ENCODE measurements at regions of chr2 and their contacts with region 1.

Region 1: GRCh38 chr2:43226558-43226954 is at the start of gene ZFP36L2:
- DNase-seq: peak; percentile 96
- CTCF ChIP-seq: no peak

Region 2: DNA sequence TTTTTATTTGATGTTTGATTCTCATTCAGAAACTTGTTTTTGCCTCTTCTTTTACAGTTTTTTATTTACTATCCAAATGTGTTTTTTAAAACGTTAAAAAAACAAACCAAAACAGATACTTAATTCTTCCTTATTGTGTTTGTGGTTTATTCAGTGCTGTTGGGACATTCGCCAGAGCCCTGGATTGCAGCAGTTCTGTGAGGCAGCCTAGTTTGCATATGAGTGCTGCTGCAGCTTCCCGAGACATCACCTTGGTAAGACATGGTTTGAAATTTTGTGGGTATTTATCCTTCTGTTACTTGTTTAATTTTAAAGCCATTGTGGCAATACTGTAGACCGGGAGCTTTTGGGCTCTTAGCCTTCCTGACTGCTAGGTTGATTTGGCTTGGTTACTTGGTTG is 566.9 kb before region 1 on chr2:
- CTCF ChIA-PET with region 1: no interaction called
- POLR2A ChIA-PET with region 1: no interaction called
- DNase-seq: no peak
- CTCF ChIP-seq: no peak

Region 3: DNA sequence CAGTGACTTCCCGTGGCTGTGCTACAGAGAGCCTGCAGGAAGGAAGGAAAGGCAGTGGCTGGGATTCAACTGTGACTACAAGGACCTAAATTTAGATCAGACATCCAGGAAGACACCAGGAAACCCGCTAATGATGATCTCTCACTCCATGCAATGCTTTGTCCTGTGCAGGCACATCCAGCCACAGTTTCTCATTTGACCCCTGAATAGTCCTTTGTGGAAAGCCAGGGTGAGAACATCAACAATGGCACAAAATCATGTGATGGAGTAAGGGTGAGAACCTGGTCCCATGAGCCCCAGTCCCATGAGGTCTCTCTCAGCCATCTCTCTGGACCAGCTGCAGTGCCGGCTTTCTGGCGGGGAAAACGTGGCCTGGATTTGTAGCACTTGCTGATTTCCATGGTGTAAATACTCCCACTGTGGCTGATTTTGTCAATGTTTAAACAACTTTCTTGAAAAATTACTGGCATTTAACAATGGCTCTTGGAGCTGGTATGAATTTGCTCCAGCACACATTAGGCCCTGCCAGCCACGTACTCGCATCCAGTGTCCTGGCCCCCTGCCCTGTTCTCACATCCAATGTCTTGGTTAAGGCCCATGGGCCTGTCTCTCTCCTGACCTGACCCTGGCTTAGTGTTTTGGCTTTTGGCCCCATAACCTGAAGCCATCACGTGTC is 275.2 kb before region 1 on chr2:
- CTCF ChIA-PET with region 1: interaction called, 39 read pairs
- POLR2A ChIA-PET with region 1: no interaction called
- DNase-seq: no peak
- CTCF ChIP-seq: no peak

Region 4: GRCh38 chr2:43169987-43170386 is 56.6 kb before region 1 on chr2:
- CTCF ChIA-PET with region 1: interaction called, 19 read pairs
- POLR2A ChIA-PET with region 1: interaction called, 13 read pairs
- DNase-seq: peak; percentile 67
- CTCF ChIP-seq: peak; percentile 68

Region 5: DNA sequence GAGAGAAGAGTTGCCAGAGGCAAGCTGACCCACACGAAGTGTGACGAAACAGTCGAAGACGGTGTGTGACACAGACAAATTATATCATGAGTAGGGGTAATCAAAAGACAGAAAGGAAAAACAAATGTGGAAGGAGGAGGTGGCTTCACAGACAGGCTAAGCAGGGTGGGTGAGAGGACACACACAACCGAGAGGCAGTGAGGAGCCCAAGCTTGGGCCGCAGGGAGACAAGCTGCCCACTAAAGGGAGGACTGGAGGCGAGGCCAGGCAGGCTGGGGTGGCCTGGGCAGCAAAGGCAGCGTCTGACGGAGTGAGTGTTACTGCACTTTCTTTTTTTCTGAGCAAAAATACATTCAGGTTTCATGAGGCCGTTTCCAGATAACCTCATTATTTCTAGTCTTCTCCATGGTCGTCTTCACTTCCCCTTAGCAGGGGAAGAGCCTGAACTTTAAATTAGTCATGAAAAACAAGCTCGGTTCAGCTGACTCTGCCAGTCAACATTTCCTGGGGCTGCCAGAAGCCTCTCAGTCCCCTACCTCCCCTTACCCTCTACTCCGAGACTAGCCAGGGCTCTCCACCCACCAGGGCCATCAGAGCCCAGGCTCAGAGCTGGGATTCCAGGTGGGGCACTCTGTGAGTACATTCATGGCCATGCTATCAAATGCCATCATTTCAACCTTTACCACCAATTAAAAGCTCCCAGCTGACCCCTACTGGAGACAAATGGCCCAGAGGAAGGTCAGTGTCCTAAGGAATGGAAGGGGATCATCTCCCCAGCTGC is 13.6 kb after region 1 on chr2:
- CTCF ChIA-PET with region 1: interaction called, 56 read pairs
- POLR2A ChIA-PET with region 1: interaction called, 10 read pairs
- DNase-seq: peak; percentile 77
- CTCF ChIP-seq: peak; percentile 10

Region 6: DNA sequence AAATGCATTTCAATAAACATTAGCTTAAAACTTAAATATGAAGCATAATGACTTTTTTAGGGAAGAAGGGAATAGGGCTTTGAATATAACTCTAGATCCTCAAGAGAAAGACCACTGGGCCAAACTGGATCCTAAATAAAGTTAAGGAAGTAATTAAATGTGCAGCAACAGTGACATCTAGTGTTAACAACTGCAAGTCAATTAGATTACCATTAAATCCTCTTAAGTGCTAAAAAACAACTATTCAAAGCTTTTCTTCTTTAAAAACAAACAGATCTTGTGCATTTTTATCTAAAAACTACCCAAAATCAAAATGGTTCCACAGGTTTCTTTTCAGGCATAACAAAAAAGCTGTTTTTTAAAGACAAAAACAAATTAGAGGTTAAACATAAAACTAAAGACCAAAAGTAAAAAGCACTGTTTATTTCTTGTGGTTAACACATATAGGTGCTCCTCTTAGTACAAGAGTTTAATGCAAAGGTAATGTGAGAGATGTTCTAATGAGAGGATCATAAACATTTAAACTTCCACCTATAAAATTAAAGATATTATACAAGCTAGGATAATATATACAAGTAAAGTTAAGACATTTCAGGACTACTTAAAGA is 257.9 kb after region 1 on chr2:
- CTCF ChIA-PET with region 1: interaction called, 55 read pairs
- POLR2A ChIA-PET with region 1: interaction called, 4 read pairs
- DNase-seq: no peak
- CTCF ChIP-seq: peak; percentile 38

Measured in GM10248 (cell line).